GM10248 (cell line): ENCODE measurements at regions of chr15 and their contacts with region 1.

Region 1: GRCh38 chr15:90423801-90424319 is 35.8 kb downstream of the IQGAP1 start:
- DNase-seq: no peak
- CTCF ChIP-seq: no peak

Region 2: DNA sequence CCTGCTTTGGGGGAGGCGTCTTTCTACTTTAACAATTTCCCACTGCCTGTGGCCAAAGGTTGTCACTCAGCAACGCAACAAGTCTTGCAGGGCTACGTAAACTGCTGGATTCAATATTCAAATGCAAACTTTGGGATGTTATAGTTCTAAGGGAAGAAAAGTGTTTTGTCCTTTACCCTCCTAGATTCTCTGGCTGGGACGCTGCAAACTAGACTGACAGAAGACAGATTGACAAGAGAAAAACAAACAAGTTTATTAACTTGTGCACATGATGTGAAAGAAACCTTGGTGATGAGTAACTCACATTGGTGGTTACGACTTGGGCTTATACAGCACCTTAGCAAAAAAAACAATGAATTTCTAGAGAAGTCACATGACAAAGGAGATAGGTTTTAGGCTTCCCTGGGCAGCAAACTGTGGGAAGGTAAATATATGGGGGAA is 477.1 kb before region 1 on chr15:
- CTCF ChIA-PET with region 1: no interaction called
- POLR2A ChIA-PET with region 1: no interaction called
- DNase-seq: no peak
- CTCF ChIP-seq: no peak

Region 3: DNA sequence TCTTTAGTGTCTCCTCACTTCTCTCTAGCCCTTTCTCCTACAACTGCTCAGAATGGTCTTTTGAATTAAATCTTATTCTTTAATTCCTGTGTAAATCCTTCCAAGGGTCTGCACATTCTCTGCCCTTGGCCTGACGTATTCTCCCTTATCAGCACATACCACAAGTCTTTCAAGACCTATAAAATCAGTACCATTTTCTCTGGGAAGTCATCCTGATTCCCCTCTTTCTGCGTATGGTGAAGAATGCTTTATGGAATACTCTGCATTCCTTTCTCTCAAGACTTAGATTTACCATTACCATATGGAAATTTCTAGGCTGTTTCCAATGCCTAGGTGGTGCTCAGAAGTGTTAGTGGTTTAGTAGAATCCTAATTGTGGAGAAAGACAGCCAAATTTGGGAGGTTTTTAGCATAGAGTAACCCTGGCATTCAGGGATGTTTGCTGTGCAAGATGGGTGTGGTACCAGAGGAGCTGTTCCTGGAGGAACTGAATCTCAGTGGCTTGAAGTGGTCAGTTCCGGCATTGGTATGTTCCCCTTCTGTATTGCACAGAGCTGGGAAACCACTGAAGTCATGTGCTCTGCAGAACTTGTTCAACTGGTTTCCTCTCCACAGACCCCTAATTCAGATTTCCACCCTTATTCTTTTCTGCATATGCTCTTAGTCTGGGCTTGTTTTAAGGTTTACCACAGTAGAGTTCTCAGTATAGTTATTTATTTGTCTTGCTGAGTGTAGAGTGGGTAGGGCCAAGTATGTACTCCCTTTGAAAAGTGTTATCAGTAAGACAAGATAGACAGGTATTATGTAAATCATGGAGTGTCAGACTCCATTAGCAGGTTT is 11.3 kb before region 1 on chr15:
- CTCF ChIA-PET with region 1: interaction called, 11 read pairs
- POLR2A ChIA-PET with region 1: no interaction called
- DNase-seq: peak; percentile 37
- CTCF ChIP-seq: no peak

Region 4: GRCh38 chr15:90762109-90762508 is 338.2 kb after region 1 on chr15:
- CTCF ChIA-PET with region 1: no interaction called
- POLR2A ChIA-PET with region 1: no interaction called
- DNase-seq: no peak
- CTCF ChIP-seq: no peak